ENCODE measurements at regions of chr18 and their contacts with region 1.

Region 1: DNA sequence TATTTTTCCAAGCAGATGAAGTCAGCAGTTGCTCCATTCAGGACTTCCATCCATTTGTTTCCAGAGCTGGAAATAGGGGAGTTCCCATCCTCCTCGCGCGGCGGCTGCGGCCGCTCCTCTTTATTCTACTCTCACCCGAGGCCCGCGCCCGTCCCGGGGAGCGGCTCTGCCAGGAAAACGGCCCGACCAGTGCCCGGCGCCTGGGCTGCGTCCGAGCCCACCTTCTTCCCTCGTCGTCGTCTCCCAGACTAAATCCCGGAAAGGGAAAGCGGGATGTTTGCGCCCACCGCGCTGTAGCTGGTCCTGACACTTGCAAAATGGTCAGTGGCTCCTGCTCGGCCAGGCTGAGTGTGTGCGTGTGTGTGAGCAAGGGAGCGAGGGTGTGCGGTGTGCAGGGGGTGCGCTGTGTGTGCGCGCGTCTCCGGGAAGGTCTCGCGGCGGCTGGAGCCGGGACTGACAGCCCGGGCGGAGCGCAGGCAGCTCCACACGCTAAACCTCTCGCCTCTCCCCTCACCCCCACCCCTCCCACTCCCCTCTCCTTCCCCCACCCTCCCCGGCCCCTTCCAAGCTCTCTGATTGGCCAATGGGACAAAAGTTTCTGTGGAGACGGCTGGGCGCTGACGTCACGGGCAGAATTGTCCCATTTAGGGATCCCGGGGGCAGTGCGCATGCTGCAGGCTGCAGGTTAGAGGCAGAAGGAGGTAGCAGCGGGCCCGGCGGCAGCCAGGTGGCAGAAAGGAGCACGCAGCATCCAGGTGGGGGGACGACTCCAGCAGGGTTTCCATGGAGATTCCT is at the start of gene NOL4:
- H3K4me3 ChIP-seq: peak within 1 kb of the TSS; percentile 70
- H3K27ac ChIP-seq: peak within 1 kb of the TSS; percentile 52; the same call in 1 of the 2 replicates
- H3K4me1 ChIP-seq: no peaks in the 10 kb centered on the region
- CTCF ChIP-seq: peak; percentile 90

Region 2: DNA sequence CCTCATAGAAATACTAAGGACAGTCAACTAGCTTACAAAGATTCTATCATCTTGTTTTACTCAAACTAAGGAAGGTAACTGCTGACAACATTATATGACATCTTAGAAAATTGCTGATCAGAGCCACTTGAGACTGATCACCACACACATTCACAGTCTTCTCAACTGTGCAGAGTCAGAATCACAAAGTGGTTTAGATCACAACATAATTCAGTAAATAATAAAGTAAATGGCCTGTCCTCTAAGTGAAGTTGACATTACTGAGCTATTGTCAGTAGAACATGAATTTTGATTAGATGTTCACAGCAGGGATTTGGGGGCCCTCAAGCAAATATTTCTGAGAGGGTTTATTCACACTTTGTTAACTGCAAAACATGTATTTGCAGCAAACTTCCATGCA is 28.4 kb before region 1 on chr18:
- CTCF ChIA-PET with region 1: interaction called, 19 read pairs
- POLR2A ChIA-PET with region 1: interaction called, 3 read pairs
- H3K4me3 ChIP-seq: no peak overlapping the region
- H3K27ac ChIP-seq: no peak overlapping the region
- H3K4me1 ChIP-seq: no peaks in the 10 kb centered on the region
- CTCF ChIP-seq: no peak

Region 3: GRCh38 chr18:34283506-34283905 is 58.9 kb after region 1 on chr18:
- CTCF ChIA-PET with region 1: interaction called, 10 read pairs
- POLR2A ChIA-PET with region 1: no interaction called
- H3K4me3 ChIP-seq: no peak overlapping the region
- H3K27ac ChIP-seq: no peak overlapping the region
- H3K4me1 ChIP-seq: no peaks in the 10 kb centered on the region
- CTCF ChIP-seq: no peak

Measured in HEK293 (cell line).